ENCODE measurements at regions of chr2 and their contacts with region 1.

Region 1: GRCh38 chr2:86221066-86221684 is 21.9 kb downstream of the MRPL35 start:
- DNase-seq: peak; percentile 32 to 60 (median 48)
- H3K4me3 ChIP-seq: no peak overlapping the region
- H3K4me3 Mint-ChIP-seq: no peak overlapping the region
- H3K27ac ChIP-seq: no peak overlapping the region
- H3K27ac Mint-ChIP-seq: peak overlapping the region in 2 of 7 donors; percentile 24 to 59
- H3K4me1 ChIP-seq: peaks cover 14% of the 10 kb centered on the region in 2 donors
- H3K4me1 Mint-ChIP-seq: peaks cover 19% of the 10 kb centered on the region
- H3K27me3 ChIP-seq: no peaks in the 10 kb centered on the region
- H3K27me3 Mint-ChIP-seq: peaks cover 0 to 1% (median 1%) of the 10 kb centered on the region in 3 donors
- CTCF ChIP-seq: peak; percentile 85

Region 2: GRCh38 chr2:86087936-86088850 is 133.0 kb before region 1 on chr2:
- intact Hi-C with region 1: no loop called
- DNase-seq: no peak
- H3K4me3 ChIP-seq: no peak overlapping the region
- H3K4me3 Mint-ChIP-seq: no peak overlapping the region
- H3K27ac ChIP-seq: no peak overlapping the region
- H3K27ac Mint-ChIP-seq: peak overlapping the region in 1 of 7 donors; percentile 30
- H3K4me1 ChIP-seq: no peaks in the 10 kb centered on the region
- H3K4me1 Mint-ChIP-seq: no peaks in the 10 kb centered on the region
- H3K27me3 ChIP-seq: no peaks in the 10 kb centered on the region
- H3K27me3 Mint-ChIP-seq: no peaks in the 10 kb centered on the region
- CTCF ChIP-seq: peak; percentile 65

Region 3: GRCh38 chr2:86298411-86299379 is 77.5 kb after region 1 on chr2:
- intact Hi-C with region 1: loop called in 1 of 2 experiments (anchors 5 kb)
- DNase-seq: no peak
- H3K4me3 ChIP-seq: no peak overlapping the region
- H3K4me3 Mint-ChIP-seq: no peak overlapping the region
- H3K27ac ChIP-seq: no peak overlapping the region
- H3K27ac Mint-ChIP-seq: no peak overlapping the region
- H3K4me1 ChIP-seq: no peaks in the 10 kb centered on the region
- H3K4me1 Mint-ChIP-seq: no peaks in the 10 kb centered on the region
- H3K27me3 ChIP-seq: peaks cover 0 to 15% of the 10 kb centered on the region in 2 donors
- H3K27me3 Mint-ChIP-seq: peaks cover 16 to 25% (median 19%) of the 10 kb centered on the region in 3 donors
- CTCF ChIP-seq: no peak

Region 4: GRCh38 chr2:86368161-86368824 is 147.1 kb after region 1 on chr2:
- intact Hi-C with region 1: loop called (anchors 5 to 10 kb)
- DNase-seq: peak; percentile 22 to 46 (median 41)
- H3K4me3 ChIP-seq: peak overlapping the region in 2 of 3 experiments; percentile 12 to 48
- H3K4me3 Mint-ChIP-seq: peak overlapping the region; percentile 63 to 77
- H3K27ac ChIP-seq: peak overlapping the region in 1 of 2 donors; percentile 39
- H3K27ac Mint-ChIP-seq: peak overlapping the region; percentile 1 to 80 (median 29)
- H3K4me1 ChIP-seq: peaks cover 22 to 23% of the 10 kb centered on the region in 2 donors
- H3K4me1 Mint-ChIP-seq: peaks cover 38% of the 10 kb centered on the region
- H3K27me3 ChIP-seq: no peaks in the 10 kb centered on the region
- H3K27me3 Mint-ChIP-seq: peaks cover 0 to 4% (median 3%) of the 10 kb centered on the region in 3 donors
- CTCF ChIP-seq: peak; percentile 72

Measured in CD14-positive monocyte (primary cell).